ENCODE measurements at regions of chr12 and their contacts with region 1.

Region 1: DNA sequence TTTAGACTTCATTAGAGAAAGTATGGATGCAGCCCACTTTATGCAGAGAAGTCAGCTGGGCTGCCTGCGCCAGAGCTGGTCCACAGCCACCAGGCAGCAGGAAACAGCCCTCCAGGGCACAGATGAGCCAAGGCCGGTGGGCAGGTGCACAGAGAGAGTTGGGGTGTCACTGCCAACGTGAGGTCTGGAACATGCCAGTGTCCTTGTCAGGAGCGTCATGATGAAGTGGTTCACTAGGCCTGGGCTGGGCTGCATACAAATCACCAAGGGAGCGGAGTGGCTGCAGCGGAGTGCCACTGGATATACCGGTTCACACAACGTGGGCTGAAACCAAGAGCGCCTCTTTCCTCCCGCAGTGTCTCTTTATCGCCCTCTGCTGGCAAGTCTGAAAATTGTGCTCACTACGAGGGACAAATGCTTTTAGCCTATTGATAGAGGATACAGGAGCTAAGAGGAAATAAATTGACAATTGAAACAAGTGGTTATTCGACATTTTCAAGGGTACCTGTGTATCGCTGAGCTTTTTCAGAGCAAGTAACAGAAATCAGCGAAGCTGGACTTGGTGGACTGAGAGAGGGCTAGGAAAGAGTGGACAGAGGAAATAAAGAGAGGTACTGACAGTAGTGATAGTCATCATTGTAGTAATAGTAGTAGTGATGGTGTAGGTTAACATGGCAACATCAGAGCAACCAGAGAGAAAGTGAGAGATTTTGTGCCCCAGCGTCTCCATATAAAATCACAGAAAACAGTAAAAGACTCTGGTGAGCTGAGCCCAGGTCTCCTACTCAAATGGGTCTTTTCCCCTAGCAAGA is 52.0 kb upstream of the ITPR2 start:
- DNase-seq: peak; percentile 90
- ATAC-seq: peak; percentile 97
- H3K4me3 Mint-ChIP-seq: peak overlapping the region; percentile 60
- H3K27ac Mint-ChIP-seq: no peak overlapping the region
- H3K4me1 Mint-ChIP-seq: peaks cover 9% of the 10 kb centered on the region
- H3K27me3 Mint-ChIP-seq: peaks cover 2% of the 10 kb centered on the region
- CTCF ChIP-seq: peak; percentile 96

Region 2: DNA sequence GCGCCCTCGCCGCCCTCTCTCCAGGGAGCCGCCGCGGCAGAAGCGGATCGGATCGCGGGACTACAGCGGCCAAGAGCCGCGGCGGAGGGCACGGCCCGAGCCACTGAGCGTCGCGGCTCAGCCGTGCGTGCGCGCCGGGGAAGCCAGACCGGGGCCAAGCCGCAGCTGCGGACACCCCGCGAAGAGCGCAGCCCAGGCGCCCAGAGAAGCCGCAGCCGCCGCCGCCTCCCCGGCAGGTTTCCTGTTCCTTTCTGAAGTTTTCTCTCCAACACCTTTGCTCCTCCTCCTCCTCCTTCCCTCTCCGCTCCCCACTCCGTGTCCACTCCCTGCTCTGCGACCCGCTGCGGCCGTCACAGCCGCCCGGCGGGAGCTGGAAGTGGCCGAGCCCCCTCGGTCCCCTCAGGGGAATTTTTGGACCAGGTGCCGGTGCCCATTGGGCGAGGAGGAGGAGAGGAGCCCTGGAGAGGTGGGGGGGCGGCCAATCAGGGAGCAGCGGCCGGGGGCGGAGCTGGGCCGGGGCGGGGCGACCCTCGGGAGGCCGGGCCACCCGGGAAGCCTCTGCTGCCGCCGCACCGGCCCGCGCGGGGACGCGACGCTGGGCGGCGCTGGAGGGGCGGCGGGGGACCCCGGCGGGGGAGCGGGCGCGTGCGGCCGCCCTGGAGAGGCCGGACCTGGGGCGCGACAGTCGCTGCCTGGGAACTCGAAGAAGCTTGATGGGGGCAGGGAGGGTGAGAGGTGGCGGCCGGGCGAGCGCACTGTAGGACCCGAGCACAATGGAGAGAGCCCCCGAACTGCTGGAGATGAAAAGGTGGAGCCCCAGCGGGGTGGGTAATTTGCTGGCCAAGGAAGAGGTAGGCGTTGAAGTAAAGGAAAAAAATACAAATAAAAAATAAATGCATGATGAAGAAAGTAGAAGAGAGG is 51.9 kb before region 1 on chr12 and contains the start of gene ITPR2:
- CTCF ChIA-PET with region 1: interaction called, 33 read pairs
- POLR2A ChIA-PET with region 1: no interaction called
- intact Hi-C with region 1: no loop called
- DNase-seq: peak; percentile 96
- ATAC-seq: peak; percentile 94
- H3K4me3 Mint-ChIP-seq: peak within 1 kb of the TSS; percentile 95
- H3K27ac Mint-ChIP-seq: peak within 1 kb of the TSS; percentile 98
- H3K4me1 Mint-ChIP-seq: peaks cover 38% of the 10 kb centered on the region
- H3K27me3 Mint-ChIP-seq: no peaks in the 10 kb centered on the region
- CTCF ChIP-seq: peak; percentile 34
- total RNA-seq, gene ITPR2: 38.9 to 41.2 TPM

Region 3: DNA sequence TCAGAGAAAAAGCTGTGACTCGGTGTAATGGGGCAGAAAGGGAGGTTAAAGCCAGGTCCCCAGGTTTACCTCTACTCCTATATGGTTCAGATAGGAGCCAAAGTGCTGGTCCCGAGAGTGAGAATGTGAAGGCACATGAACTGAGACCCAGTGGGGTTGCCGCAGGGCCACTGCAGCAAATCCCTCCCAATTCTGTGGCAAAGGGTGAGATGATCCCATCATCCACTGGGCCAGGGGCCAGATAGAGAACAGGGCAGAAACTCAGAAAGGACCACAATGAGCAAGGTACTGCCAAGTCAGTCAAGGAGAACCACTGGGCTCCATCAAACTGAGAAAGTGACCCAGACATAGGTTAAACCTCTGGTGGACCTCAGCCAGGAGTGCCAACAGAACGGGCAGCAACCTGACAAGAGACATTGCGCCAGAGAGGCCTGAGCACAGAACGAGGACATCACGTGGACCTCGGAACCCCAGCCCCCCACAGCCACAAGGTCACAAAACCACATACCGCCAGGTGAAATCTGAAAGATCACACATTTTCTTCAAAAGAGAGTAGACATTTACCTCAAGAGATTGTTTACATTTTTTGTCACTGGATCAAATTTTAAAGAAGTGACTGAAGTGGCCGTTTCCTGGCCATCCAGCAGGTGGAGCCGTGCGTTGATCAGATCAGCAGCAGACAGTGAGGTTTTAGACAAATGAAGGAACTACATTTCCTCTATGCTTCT is 31.5 kb before region 1 on chr12:
- CTCF ChIA-PET with region 1: interaction called, 105 read pairs
- POLR2A ChIA-PET with region 1: no interaction called
- intact Hi-C with region 1: loop called (anchors 2 kb)
- DNase-seq: peak; percentile 86
- ATAC-seq: peak; percentile 97
- H3K4me3 Mint-ChIP-seq: no peak overlapping the region
- H3K27ac Mint-ChIP-seq: no peak overlapping the region
- H3K4me1 Mint-ChIP-seq: no peaks in the 10 kb centered on the region
- H3K27me3 Mint-ChIP-seq: peaks cover 3% of the 10 kb centered on the region
- CTCF ChIP-seq: peak; percentile 75

Region 4: DNA sequence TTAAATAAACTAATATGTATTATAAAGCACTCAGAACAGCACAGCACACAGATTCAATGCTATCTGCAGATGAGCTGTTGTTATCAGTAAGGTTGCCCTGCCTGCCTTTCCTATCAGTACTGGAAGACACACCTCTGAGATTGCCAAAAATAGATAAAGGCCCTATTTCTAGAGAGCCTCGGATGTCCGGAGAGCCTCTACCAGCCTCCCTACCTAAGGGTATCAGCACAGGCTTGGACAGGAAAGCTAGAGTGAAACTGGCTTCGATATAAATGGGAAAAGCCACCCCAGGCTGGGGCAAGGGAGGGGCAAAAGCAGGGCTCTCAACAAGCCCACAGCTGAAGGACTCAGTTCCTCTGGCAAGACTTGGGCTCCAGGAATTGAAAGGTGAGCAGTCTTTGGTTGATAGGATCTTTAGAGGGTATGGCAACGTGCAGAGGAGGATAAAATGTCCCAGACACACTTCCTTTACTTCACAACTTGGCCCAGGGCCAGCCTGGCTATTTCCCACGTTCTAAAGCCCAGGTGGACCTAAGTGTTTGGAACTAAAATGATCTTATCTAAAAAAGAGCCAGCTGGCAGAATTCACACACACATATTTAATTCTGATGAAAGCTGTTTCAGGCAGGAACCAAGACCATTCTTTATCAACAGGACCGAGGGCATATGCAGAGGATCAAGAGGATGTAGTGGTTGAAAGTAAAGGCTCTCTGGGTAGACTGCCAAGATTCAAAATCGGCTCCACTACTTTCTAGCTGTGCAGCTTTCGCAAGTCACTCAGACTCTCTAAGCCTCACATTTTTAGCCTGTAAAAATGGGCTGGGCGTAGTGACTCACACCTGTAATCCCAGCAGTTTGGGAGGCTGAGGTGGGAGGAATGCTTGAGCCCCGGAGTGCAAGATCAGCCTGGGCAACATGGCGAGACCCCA is 14.2 kb before region 1 on chr12:
- CTCF ChIA-PET with region 1: interaction called, 55 read pairs
- POLR2A ChIA-PET with region 1: interaction called, 4 read pairs
- intact Hi-C with region 1: no loop called
- DNase-seq: no peak
- ATAC-seq: no peak
- H3K4me3 Mint-ChIP-seq: no peak overlapping the region
- H3K27ac Mint-ChIP-seq: no peak overlapping the region
- H3K4me1 Mint-ChIP-seq: peaks cover 25% of the 10 kb centered on the region
- H3K27me3 Mint-ChIP-seq: peaks cover 4% of the 10 kb centered on the region
- CTCF ChIP-seq: no peak

Region 5: DNA sequence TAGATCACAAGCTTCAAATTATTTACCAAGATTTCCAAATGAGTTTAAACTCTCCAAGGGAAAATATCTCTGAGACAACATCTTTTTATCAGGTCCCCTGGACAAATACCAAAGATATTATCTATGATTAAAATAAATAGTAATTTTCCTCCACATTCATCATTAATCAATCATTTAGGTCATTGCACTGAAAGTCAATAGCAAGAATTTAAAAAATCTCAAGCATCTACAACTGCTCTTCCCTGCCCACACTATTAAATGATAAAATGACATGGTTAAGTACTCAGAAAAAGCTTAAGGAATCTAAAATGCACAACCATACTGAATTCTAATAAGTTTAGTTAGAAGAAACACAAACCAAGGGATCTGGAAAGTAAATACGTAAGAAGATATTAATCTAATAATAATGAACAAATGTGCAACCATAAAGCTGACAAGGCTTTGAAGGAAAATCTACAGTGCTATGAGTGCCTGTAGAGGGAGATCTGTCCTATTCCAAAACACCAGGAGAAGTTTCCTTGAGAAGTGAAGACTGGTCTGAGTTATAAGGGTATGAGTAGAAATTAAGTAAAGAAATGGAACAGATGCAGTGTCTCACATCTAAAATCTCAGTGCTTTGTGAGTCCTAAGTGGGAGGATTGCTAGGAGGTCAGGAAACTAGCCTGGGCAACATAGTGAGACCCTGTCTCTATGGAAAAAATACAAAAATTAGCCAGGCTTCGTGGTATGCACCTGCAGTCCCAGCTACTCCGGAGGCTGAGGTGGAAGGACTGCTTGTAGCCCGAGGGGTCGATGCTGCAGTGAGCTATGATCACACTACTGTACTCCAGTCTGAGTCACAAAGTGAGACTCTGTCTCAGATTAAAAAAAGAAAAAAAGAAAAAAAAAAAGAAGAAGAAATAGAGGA is 33.6 kb after region 1 on chr12:
- CTCF ChIA-PET with region 1: interaction called, 12 read pairs
- POLR2A ChIA-PET with region 1: no interaction called
- intact Hi-C with region 1: no loop called
- DNase-seq: no peak
- ATAC-seq: no peak
- H3K4me3 Mint-ChIP-seq: no peak overlapping the region
- H3K27ac Mint-ChIP-seq: no peak overlapping the region
- H3K4me1 Mint-ChIP-seq: peaks cover 6% of the 10 kb centered on the region
- H3K27me3 Mint-ChIP-seq: no peaks in the 10 kb centered on the region
- CTCF ChIP-seq: no peak